A673 (cell line): ENCODE measurements at regions of chr2 and their contacts with region 1.

Region 1: DNA sequence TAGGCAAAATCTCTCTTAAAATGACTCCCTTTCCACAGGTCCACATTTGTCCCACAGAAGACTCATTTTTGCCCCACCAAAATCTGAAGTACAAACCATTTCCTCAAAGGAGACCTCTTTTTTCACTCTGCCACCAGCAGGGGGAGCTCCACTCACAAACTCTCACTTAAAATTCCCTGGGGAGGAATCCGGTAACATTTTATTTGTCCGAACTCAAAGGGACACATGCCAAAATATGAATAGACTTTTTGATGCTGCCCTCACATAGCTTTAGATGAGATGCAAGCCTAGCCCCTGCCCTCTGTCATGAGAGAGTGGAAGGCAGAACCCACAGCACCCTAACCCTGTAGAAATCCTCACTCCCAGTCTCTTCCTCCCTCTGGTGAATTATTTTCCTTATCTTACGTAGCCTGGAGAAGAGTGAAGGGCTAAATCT is 57.1 kb downstream of the RMDN2 start:
- DNase-seq: peak; percentile 82
- H3K4me3 ChIP-seq: no peak overlapping the region
- H3K27ac ChIP-seq: no peak overlapping the region
- H3K4me1 ChIP-seq: peaks cover 4% of the 10 kb centered on the region
- H3K27me3 ChIP-seq: no peaks in the 10 kb centered on the region
- CTCF ChIP-seq: peak; percentile 93

Region 2: GRCh38 chr2:38115216-38116032 is 133.3 kb after region 1 on chr2:
- CTCF ChIA-PET with region 1: no interaction called
- POLR2A ChIA-PET with region 1: no interaction called
- intact Hi-C with region 1: loop called (anchors 2 kb)
- DNase-seq: peak; percentile 85
- H3K4me3 ChIP-seq: no peak overlapping the region
- H3K27ac ChIP-seq: no peak overlapping the region
- H3K4me1 ChIP-seq: peaks cover 19% of the 10 kb centered on the region
- H3K27me3 ChIP-seq: no peaks in the 10 kb centered on the region
- CTCF ChIP-seq: peak; percentile 97